Activated T-helper 2 cell treated with anti-CD3 and anti-CD28 coated beads, Interferon-gamma antibody, Interleukin-2, Interleukin-4, amounts not matched to agents 10 μg/mL and 5 μg/mL and 100 μg/mL, durations not matched to agents 14 hours and 24 hours and 36 hours (primary cell): ENCODE measurements at regions of chr1 and their contacts with region 1.

Region 1: GRCh38 chr1:117067533-117068370 is 7.6 kb downstream of the TTF2 start:
- DNase-seq: no peak
- H3K4me3 Mint-ChIP-seq: no peak overlapping the region
- H3K27ac Mint-ChIP-seq: no peak overlapping the region
- H3K4me1 Mint-ChIP-seq: peaks cover 48% of the 10 kb centered on the region
- H3K27me3 Mint-ChIP-seq: no peaks in the 10 kb centered on the region

Region 2: DNA sequence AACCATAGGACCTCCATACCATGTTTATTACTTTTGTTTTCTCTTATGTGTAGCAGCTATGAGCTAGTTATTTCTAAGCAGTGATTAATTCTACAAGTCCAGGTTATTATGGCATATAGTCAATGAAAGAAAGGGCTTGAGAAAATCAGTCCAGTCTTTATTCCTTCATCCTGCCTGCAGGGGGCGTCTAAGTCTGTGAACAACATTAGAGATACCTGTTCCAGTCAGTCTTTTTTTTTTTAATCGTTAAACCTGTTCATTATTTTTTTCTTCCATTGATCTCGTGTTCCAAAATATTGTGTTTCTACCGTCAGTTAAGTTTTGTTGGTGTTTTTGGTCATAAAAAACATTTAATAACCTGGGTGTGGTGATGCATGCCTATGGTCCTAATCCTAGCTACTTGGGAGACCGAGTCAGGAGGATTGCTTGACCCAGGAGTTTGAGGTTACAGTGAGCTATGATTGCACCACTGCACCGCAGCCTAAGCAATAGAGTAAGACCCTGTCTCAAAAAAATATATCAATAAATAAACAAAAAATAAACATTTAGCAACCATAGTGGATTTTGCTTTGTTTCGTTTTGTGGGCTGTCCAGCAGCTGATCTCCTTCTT is 342.9 kb before region 1 on chr1:
- intact Hi-C with region 1: no loop called
- DNase-seq: peak; percentile 65
- H3K4me3 Mint-ChIP-seq: no peak overlapping the region
- H3K27ac Mint-ChIP-seq: no peak overlapping the region
- H3K4me1 Mint-ChIP-seq: peaks cover 33% of the 10 kb centered on the region
- H3K27me3 Mint-ChIP-seq: no peaks in the 10 kb centered on the region

Region 3: GRCh38 chr1:117093870-117094621 is 26.3 kb after region 1 on chr1:
- intact Hi-C with region 1: loop called (anchors 1 kb)
- DNase-seq: peak; percentile 22
- H3K4me3 Mint-ChIP-seq: no peak overlapping the region
- H3K27ac Mint-ChIP-seq: peak overlapping the region; percentile 35
- H3K4me1 Mint-ChIP-seq: peaks cover 16% of the 10 kb centered on the region
- H3K27me3 Mint-ChIP-seq: no peaks in the 10 kb centered on the region

Region 4: DNA sequence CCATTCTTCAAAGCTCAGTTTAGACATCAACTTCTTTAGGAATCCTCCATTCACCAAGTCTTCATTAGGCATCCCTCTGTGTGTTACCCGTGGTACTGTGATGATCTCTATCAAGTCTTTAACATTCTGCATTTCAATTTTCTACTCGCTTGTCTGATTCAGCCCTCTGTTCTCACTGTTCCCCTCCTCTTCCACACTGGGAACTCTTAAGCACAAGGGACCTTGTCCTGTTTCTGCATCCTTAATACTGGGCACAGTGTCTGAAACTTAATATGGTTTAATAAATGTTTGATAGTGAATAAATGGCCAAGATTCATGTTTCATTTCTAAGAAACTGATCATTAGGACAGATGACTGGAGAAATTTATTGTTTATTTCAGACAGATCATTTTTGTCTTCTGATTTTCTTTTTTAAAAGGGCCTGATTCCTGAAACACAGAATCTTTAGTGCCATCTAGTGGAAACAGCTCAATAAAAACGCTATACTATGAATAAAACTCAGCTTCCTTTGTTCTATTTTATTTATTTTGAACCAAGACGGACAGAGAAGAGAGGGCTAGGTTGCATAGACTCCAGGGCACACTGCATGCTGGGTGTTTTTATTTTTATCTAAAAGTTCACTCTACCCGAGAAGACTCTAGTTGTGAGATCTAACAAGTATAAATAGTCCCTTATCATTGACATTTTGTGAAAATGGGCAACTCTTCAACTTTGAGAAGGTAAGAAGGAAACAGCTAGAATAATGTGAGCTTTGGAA is 60.7 kb after region 1 on chr1:
- intact Hi-C with region 1: loop called (anchors 1 kb)
- DNase-seq: no peak
- H3K4me3 Mint-ChIP-seq: no peak overlapping the region
- H3K27ac Mint-ChIP-seq: no peak overlapping the region
- H3K4me1 Mint-ChIP-seq: peaks cover 1% of the 10 kb centered on the region
- H3K27me3 Mint-ChIP-seq: peaks cover 26% of the 10 kb centered on the region

Region 5: GRCh38 chr1:117271571-117272358 is 204.0 kb after region 1 on chr1:
- intact Hi-C with region 1: no loop called
- DNase-seq: no peak
- H3K4me3 Mint-ChIP-seq: no peak overlapping the region
- H3K27ac Mint-ChIP-seq: no peak overlapping the region
- H3K4me1 Mint-ChIP-seq: no peaks in the 10 kb centered on the region
- H3K27me3 Mint-ChIP-seq: no peaks in the 10 kb centered on the region